Right ventricle myocardium inferior (tissue), 1 donor: ENCODE measurements at regions of chr6 and their contacts with region 1.

Region 1: DNA sequence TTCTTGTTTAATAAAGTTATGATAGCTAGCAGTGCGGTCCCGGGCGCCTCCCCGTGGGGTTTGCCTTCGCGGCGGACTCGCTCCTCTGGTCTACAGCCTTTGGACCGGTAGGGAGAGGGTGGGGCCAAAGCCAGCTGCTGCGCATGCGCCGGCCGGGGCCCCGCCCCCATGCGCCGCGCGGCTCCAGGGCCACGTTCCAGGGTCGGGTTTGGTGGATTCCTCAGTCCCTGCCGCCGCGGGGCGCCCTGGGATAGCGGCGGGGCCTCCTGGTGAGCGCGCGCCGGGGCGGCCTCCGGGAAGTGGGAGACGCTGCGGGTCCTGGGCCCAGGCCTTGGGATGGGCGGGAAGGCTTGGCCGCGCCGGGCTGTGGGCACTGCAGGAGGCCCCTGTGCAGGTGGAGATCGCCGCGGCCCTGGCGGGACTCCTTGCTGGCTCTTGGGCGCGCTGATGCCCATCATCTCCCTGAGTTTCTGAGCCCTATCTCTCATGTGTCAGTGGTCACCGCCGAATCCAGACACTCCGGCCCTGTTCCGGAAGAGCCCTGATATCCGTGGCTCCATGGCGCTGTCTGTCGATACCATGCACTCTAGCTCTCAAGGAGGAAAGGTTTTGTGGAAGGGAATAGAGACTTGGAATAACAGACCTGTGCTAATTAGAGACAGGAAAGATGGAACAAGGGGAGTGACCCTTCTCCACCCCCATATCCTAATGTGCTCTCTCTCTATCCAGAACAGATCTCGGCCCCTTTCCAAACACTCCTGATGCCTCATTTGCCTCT is at the start of gene VARS2:
- DNase-seq: peak; percentile 94
- ATAC-seq: peak; percentile 98
- total RNA-seq, gene VARS2: 18.3 TPM

Region 2: DNA sequence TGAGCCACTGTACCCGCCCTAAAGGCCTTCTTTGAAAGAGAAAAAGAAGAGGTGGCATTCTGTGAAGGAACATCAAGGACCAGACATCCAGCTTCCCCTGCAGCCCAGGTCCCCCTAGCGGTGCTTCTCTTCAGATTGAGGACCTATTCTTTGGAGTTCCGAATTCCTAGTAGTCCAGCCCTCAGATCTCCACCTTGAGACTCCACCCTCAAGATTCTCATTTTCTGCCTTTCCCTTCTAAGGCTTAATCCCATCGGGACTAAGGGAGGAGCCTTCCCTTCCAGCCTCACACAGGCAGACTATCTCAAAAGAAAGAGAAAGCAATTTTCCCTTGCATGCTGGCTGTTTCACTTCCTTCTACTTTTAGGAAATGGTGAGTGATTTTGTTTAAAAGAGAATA is 128.5 kb after region 1 on chr6:
- intact Hi-C with region 1: loop called (anchors 2 kb)
- DNase-seq: no peak
- ATAC-seq: peak; percentile 57

Region 3: GRCh38 chr6:31068669-31069340 is 154.5 kb after region 1 on chr6:
- intact Hi-C with region 1: loop called (anchors 1 kb)
- DNase-seq: peak; percentile 82
- ATAC-seq: peak; percentile 84